ENCODE measurements at regions of chr5 and their contacts with region 1.

Region 1: GRCh38 chr5:119524485-119524884 is 72.2 kb downstream of the HSD17B4 start:
- DNase-seq: peak in 1 of 2 experiments; percentile 63
- H3K4me3 ChIP-seq: no peak overlapping the region
- H3K4me3 Mint-ChIP-seq: no peak overlapping the region
- H3K27ac Mint-ChIP-seq: no peak overlapping the region
- H3K4me1 ChIP-seq: peaks cover 27% of the 10 kb centered on the region
- H3K4me1 Mint-ChIP-seq: peaks cover 19% of the 10 kb centered on the region
- H3K27me3 ChIP-seq: no peaks in the 10 kb centered on the region
- H3K27me3 Mint-ChIP-seq: no peaks in the 10 kb centered on the region
- CTCF ChIP-seq: no peak

Region 2: GRCh38 chr5:119483155-119483554 is 41.3 kb before region 1 on chr5:
- CTCF ChIA-PET with region 1: no interaction called
- POLR2A ChIA-PET with region 1: no interaction called
- intact Hi-C with region 1: loop called (anchors 2 kb)
- DNase-seq: peak in 1 of 2 experiments; percentile 5
- H3K4me3 ChIP-seq: no peak overlapping the region
- H3K4me3 Mint-ChIP-seq: no peak overlapping the region
- H3K27ac Mint-ChIP-seq: peak overlapping the region; percentile 68
- H3K4me1 ChIP-seq: peaks cover 5% of the 10 kb centered on the region
- H3K4me1 Mint-ChIP-seq: peaks cover 24% of the 10 kb centered on the region
- H3K27me3 ChIP-seq: no peaks in the 10 kb centered on the region
- H3K27me3 Mint-ChIP-seq: no peaks in the 10 kb centered on the region
- CTCF ChIP-seq: no peak

Region 3: GRCh38 chr5:119585433-119585832 is 60.9 kb after region 1 on chr5:
- CTCF ChIA-PET with region 1: no interaction called
- POLR2A ChIA-PET with region 1: no interaction called
- intact Hi-C with region 1: loop called (anchors 1 kb)
- DNase-seq: peak in 1 of 2 experiments; percentile 61
- H3K4me3 ChIP-seq: no peak overlapping the region
- H3K4me3 Mint-ChIP-seq: no peak overlapping the region
- H3K27ac Mint-ChIP-seq: peak overlapping the region; percentile 17
- H3K4me1 ChIP-seq: peaks cover 17% of the 10 kb centered on the region
- H3K4me1 Mint-ChIP-seq: peaks cover 27% of the 10 kb centered on the region
- H3K27me3 ChIP-seq: no peaks in the 10 kb centered on the region
- H3K27me3 Mint-ChIP-seq: no peaks in the 10 kb centered on the region
- CTCF ChIP-seq: no peak

Region 4: GRCh38 chr5:119808474-119808873 is 284.0 kb after region 1 on chr5:
- CTCF ChIA-PET with region 1: no interaction called
- POLR2A ChIA-PET with region 1: no interaction called
- intact Hi-C with region 1: no loop called
- DNase-seq: peak in 1 of 2 experiments; percentile 4
- H3K4me3 ChIP-seq: no peak overlapping the region
- H3K4me3 Mint-ChIP-seq: no peak overlapping the region
- H3K27ac Mint-ChIP-seq: no peak overlapping the region
- H3K4me1 ChIP-seq: no peaks in the 10 kb centered on the region
- H3K4me1 Mint-ChIP-seq: no peaks in the 10 kb centered on the region
- H3K27me3 ChIP-seq: no peaks in the 10 kb centered on the region
- H3K27me3 Mint-ChIP-seq: no peaks in the 10 kb centered on the region
- CTCF ChIP-seq: no peak

Measured in Caco-2 (cell line).